Cardiac septum (tissue), 1 donor: ENCODE measurements at regions of chr5 and their contacts with region 1.

Region 1: GRCh38 chr5:42994246-42995151 is 45.6 kb downstream of the ANXA2R start:
- DNase-seq: peak; percentile 94

Region 2: GRCh38 chr5:42908509-42909488 is 85.7 kb before region 1 on chr5:
- intact Hi-C with region 1: loop called (anchors 5 kb)
- DNase-seq: peak; percentile 95

Region 3: DNA sequence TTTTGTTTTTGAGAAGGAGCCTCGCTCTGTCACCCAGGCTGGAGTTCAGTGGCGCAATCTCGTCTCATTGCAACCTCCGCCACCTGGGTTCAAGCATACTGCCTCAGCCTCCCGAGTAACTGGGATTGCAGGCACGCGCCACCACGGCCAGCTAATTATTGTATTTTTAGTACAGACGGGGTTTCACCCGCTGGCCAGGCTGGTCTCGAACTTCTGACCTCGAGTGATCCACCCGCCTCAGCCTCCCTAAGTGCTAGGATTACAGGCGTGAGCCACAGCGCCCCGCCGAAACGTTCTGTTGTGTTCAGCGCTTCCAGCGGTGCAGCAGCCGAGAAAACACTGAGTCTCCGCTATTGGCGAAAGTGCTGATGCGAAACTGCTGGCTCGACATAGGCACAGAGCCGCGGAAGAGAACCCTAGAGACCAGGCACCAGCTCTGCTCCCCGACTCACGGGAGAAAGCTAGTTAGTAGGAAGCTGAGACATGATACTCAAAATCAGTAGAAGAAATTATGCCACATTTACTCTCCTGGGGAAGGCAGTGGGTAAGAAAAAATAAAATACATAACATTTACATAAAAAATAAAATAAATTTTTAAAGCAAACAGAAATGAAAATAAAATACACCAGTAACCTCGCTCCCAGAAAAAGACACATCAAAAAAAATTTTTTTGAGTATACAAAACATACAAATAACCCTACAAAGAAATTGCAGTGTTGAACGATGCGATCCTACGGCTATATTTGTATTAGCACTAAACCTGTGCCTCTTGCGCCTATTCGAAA is 14.1 kb after region 1 on chr5:
- intact Hi-C with region 1: loop called (anchors 1 kb)
- DNase-seq: peak; percentile 91

Region 4: DNA sequence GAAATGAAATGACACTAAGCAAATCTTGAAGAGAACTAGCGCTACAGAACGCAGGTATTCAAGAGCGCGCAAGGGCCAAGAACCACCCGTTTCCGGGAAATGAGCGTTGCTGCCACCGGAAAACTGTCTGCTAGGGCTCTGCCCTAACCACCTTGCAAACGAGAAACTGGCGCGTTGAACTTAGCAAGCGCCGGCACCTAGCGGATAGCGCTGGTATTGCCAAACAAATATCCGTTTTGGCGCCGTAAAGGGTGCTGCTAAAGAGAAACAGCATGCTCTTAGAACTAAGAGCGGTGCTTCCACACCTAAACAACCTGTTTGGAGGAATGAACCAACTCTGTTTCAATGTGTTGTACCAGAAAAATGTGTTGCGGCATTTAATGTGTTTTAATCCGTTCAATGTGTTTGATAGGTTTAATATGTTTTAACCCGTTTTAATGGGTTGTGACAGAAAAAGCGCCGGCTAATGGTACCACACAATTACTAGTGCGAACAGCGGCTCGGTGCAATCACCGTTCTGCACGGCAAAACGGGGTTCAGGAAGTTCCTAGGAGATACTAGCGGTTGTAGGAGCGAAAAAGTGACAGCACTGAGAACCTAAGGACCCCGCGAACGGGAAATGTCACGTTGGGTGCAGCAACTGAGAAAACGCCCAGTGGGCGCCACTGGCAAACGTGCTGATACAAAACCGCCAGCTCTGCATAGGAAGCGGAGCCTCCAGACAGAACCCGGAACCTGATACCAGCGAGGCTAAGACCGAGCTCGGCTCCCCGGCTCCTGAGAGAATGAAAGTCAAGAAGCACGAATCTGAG is 46.0 kb after region 1 on chr5 and contains the start of gene ANXA2R:
- intact Hi-C with region 1: loop called (anchors 1 kb)
- DNase-seq: peak; percentile 94
- total RNA-seq, gene ANXA2R: 1.2 TPM

Region 5: GRCh38 chr5:43105369-43106289 is 111.1 kb after region 1 on chr5:
- intact Hi-C with region 1: loop called (anchors 2 kb)
- DNase-seq: peak; percentile 94